Activated CD8-positive, alpha-beta memory T cell treated with anti-CD3 and anti-CD28 coated beads, Interleukin-2, amount 10 ng/mL, durations not matched to agents 7 days and 5 days (primary cell): ENCODE measurements at regions of chr19 and their contacts with region 1.

Region 1: DNA sequence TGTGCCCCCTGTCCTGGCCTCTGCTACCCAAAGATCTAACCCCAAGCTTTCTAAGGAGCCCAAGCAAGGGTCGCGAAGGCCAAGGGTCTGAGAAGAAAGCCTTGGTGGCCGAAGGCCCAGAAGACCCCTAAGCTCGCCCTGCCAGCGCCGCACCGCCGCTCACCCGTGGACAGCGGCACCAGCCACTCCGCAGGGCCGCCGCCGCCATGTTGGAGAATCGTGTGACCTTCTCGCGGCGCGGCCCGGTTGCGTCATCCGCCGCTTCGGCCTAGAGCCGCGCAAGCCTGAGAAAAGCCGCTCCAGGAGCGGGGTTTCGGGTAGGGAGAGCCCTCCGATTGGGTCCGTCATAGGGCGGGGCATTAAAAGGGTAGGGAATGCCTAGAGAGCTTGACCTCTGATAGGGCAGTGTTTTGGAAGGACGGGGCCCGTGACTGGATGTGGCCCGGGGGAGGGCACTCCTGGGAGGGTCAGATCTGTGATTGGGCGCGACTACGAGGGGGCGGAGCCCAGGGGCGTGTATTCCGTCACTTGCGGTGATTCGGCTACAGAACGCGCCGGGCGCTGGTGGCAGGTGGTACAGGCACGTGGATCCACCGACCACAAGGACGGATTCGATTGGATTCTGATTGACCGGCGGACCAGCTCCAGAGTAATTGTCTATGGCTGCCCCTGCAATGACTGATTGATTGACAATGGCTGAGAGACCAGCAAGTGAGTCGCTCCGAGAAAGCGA is at the start of gene TIMM44:
- DNase-seq: peak; percentile 100
- ATAC-seq: peak; percentile 99
- H3K4me3 Mint-ChIP-seq: peak within 1 kb of the TSS; percentile 83
- H3K27ac Mint-ChIP-seq: peak within 1 kb of the TSS; percentile 91
- H3K4me1 Mint-ChIP-seq: peaks cover 33% of the 10 kb centered on the region
- H3K27me3 Mint-ChIP-seq: no peaks in the 10 kb centered on the region
- total RNA-seq, gene TIMM44: 63.7 to 76.4 TPM

Region 2: GRCh38 chr19:7789447-7789846 is 154.2 kb before region 1 on chr19:
- CTCF ChIA-PET with region 1: no interaction called
- DNase-seq: no peak
- ATAC-seq: no peak
- H3K4me3 Mint-ChIP-seq: no peak overlapping the region
- H3K27ac Mint-ChIP-seq: no peak overlapping the region
- H3K4me1 Mint-ChIP-seq: no peaks in the 10 kb centered on the region
- H3K27me3 Mint-ChIP-seq: peaks cover 51% of the 10 kb centered on the region

Region 3: DNA sequence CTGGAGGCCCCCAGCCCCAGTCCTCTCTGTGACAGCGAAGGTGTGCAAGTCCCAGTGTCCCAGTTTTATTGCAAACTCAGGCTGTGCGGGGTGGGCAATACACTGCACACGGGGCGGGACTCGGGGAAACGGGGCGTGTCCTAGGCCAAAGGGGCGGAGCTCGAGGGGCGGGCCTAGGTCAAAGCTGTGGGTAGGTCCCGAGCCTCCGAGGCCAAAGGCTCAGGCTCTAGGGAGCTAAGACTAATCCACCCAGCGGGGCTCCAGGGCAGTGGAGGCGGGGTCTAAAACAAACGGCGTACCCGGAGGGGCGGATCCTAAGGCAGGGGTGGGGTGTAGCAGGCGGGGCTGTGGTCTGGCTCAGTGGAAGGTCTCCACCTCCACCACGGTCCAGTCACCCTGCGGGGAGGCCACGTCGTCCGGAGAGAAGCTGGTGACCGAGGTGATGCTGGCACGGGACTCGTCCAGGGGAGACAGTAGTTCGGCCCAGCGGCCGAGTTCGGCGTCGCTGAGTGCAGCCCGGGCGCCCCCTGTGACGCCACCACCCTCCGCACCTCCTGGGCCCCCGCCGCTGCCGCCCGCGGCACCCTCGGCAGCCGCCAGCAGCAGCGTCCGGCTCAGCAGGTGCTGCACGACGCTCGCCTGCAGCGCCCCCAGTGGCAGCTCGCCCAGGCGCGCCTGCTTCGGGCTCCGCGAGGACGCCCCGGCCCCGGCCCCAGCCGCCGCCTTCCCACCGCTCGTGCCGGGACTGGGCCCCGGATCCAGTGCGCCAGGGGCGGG is 74.7 kb before region 1 on chr19:
- CTCF ChIA-PET with region 1: interaction called, 14 read pairs
- DNase-seq: peak; percentile 84
- ATAC-seq: peak; percentile 81
- H3K4me3 Mint-ChIP-seq: peak overlapping the region; percentile 60
- H3K27ac Mint-ChIP-seq: peak overlapping the region; percentile 28
- H3K4me1 Mint-ChIP-seq: peaks cover 37% of the 10 kb centered on the region
- H3K27me3 Mint-ChIP-seq: peaks cover 60% of the 10 kb centered on the region

Region 4: GRCh38 chr19:7903244-7904073 is 40.2 kb before region 1 on chr19 and contains the start of gene MAP2K7:
- CTCF ChIA-PET with region 1: interaction called, 10 read pairs
- DNase-seq: peak; percentile 100
- ATAC-seq: peak; percentile 89
- H3K4me3 Mint-ChIP-seq: peak within 1 kb of the TSS; percentile 86
- H3K27ac Mint-ChIP-seq: peak within 1 kb of the TSS; percentile 91
- H3K4me1 Mint-ChIP-seq: peaks cover 26% of the 10 kb centered on the region
- H3K27me3 Mint-ChIP-seq: no peaks in the 10 kb centered on the region
- total RNA-seq, gene MAP2K7: 38.0 to 41.6 TPM

Region 5: DNA sequence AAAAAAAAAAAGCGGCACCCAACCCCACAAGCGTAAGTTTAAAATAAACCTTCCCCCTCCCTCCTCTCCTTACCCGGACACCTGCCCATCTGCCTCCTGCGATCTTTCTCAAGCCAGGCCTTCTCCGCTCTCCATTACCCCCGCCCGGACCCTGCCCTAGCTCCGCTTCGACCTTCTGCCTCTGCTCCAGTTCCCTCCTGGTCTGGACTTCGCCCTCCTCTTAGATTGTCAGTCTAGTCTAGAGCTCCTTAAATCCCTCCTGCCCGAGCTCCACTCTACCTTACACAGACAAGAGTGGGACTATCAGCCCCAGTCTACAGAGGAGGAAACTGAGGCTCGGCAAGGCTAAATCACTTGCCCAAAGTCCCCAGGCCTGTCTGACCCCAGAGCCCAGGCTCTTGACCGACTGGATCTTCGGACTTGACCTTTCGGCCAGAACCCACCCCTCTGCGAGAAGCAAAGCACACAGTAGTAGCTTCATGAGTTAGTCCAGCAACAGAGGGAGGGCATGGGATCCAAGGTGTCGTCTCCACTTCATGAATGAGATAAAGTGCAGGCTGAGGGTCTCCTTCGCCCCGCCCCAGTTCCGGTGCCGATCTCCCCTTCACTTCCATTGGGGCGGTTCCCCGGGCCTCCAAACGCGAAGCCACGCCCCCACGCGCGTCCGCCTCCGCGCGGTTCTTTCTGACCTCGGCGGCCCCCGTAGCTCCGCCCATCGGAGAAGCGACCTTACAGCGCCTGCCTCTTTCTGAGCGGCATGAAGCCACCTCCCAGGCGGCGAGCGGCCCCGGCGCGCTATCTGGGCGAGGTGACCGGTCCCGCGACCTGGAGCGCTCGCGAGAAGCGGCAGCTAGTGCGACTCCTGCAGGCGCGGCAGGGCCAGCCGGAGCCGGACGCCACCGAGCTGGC is 23.7 kb before region 1 on chr19 and contains the start of gene SNAPC2:
- CTCF ChIA-PET with region 1: interaction called, 75 read pairs
- DNase-seq: peak; percentile 98
- ATAC-seq: peak; percentile 78
- H3K4me3 Mint-ChIP-seq: peak within 1 kb of the TSS; percentile 83
- H3K27ac Mint-ChIP-seq: peak within 1 kb of the TSS; percentile 92
- H3K4me1 Mint-ChIP-seq: peaks cover 32% of the 10 kb centered on the region
- H3K27me3 Mint-ChIP-seq: peaks cover 28% of the 10 kb centered on the region
- total RNA-seq, gene SNAPC2: 18.0 to 24.0 TPM

Region 6: DNA sequence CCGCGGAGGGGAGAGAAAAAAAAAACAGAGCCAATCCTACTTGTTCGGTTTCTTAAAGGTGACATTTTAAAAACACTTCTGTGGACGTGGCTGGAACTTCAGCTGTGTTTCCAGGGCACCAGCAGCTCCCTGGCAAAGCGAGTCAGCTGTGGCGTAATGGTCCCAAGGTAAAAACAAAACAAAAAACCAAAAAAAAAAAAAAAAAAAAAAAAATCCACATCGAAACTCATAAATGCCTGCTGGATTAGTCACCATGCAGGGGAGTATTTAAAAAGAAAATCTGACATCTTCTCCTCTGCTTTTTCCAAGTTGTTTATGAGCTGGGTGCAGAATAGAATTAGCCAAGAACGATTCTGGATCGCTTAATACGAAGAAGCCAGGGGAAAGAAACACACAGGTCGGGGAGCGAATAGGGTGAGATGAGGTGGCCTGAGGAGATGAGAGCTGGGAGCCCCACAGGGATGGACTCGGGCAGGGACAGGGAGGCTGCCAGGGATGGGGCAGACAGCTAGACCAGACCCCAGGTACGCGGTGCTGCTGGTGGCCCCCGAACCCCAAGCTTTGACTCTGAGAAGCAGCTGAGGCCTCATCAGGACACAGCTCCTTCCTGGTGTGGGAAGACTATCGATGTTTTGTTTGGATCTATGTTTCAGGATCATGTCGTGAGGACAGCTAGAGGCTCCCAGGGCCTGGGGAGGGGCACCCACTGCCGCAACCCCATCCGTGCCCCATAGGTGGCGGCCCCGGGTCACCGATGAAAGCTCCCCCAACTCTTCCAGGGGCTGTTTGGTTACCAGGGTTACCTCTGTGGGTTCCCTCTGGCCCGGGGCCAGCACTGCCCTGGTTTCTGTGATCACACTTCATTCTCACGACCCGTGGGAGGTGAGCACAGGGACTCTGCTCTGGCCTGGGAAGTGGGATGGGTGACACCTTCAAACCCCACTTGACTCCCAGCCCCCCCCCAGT is 14.6 kb before region 1 on chr19:
- CTCF ChIA-PET with region 1: interaction called, 75 read pairs
- DNase-seq: peak; percentile 75
- ATAC-seq: peak; percentile 38
- H3K4me3 Mint-ChIP-seq: no peak overlapping the region
- H3K27ac Mint-ChIP-seq: peak overlapping the region; percentile 39
- H3K4me1 Mint-ChIP-seq: peaks cover 9% of the 10 kb centered on the region
- H3K27me3 Mint-ChIP-seq: no peaks in the 10 kb centered on the region

Region 7: GRCh38 chr19:7970716-7971448 is 27.3 kb after region 1 on chr19:
- CTCF ChIA-PET with region 1: interaction called, 19 read pairs
- DNase-seq: no peak
- ATAC-seq: peak; percentile 51
- H3K4me3 Mint-ChIP-seq: no peak overlapping the region
- H3K27ac Mint-ChIP-seq: no peak overlapping the region
- H3K4me1 Mint-ChIP-seq: peaks cover 3% of the 10 kb centered on the region
- H3K27me3 Mint-ChIP-seq: no peaks in the 10 kb centered on the region

Region 8: DNA sequence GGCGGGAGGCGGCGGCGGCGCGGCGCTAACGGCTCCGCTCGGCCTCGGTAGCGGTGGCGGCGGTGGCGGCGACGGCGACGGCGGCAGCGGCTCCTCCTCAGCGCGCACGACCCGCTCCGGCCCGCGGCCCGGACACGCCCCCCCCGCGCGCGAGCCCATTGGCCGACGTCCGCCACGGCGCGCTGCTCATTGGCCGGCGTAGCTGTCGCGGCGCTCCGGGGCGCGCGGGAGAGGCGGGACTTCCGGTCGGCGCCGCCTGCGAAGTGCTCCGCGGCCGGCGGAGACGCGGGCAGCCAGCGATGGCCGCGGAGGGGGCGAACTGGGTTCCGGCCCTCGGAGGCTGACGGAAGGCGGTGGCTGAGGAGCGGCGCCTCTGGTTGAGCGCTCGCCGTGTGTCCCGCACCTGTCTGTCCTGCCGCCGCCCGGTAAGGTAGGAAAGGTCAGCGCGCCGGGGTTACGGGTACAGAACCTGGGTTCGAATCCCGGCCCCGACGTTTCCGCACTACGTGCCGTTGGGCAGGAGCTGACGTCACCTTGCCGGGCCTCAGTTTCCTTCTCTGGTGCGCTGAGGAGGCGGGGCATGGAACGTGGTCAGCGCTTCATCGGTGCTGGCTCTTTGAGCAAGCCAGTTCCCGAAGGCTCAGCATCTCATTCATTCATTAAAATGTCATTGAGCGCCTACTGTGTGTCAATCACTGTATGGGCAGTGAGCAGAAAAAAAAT is 62.1 kb after region 1 on chr19 and contains the start of gene ELAVL1:
- CTCF ChIA-PET with region 1: interaction called, 74 read pairs
- DNase-seq: peak; percentile 91
- ATAC-seq: peak; percentile 95
- H3K4me3 Mint-ChIP-seq: peak within 1 kb of the TSS; percentile 93
- H3K27ac Mint-ChIP-seq: peak within 1 kb of the TSS; percentile 87
- H3K4me1 Mint-ChIP-seq: peaks cover 39% of the 10 kb centered on the region
- H3K27me3 Mint-ChIP-seq: no peaks in the 10 kb centered on the region
- total RNA-seq, gene ELAVL1: 119 to 150 TPM